IMR-90 (cell line): ENCODE measurements at regions of chrX and their contacts with region 1.

Region 1: DNA sequence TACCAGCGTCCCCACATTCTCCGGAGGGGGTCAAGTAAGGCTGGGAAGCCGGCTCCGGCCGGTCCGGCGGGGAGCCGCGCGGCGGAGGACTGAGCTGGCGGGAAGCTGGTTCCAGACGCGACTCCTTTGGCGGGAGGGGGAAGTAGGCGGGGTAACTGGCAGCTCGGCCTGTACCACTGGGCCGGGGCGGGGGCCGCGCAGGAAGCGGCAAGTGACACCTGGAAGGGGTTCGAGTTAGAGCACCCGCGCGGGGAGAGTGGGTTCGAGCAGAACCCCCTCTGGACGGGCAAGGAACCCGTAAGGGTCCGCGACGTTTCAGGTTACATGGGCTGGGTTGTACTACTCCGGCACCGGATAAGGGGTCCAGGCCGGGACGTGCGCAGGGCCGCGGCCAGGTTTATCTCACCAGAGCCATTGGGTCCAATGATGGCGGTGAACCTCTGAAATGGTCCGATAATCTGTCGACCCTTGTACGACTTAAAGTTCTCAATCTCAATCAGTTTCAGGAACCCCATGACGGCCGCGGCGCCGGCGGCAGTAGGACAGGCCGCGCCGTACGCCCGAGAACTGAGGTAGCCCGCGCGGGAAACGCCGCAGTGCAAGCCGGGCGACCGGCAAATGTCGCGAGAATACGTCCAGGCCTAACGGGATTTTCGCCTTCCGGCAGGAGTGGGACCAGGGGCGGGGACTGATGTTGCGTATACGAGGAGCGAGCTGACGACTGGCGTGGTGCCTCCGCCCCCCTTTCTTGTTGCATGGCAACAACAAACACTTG is at the start of gene SMC1A:
- DNase-seq: peak; percentile 98
- ATAC-seq: peak; percentile 97
- H3K4me3 ChIP-seq: peak within 1 kb of the TSS; percentile 71
- H3K27ac ChIP-seq: peak within 1 kb of the TSS; percentile 67
- H3K4me1 ChIP-seq: peaks cover 5% of the 10 kb centered on the region
- H3K27me3 ChIP-seq: no peaks in the 10 kb centered on the region
- CTCF ChIP-seq: no peak
- POLR2A ChIP-seq: peak; percentile 89
- RAD21 ChIP-seq: no peak
- total RNA-seq, gene SMC1A: 41.0 and 43.0 TPM in 2 replicates

Region 2: DNA sequence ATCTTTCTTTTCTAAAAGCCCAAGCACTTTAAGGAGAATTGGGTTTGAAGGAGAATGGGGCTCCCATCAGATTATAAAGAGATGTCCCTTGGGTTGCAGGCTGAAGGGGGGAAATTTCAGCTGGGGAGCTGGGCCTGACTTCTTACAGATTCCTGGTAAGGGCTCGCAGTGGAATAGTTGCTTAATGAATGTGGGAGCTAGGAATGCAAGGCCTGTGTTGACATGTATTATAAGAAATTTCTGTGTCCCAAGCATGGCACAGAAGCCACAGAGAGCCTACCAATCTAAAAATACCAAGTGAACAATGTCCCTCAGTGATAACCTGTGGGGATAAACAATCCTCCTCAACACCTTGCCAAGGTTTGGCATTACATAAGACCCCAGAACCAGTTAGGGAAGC is 974.8 kb after region 1 on chrX:
- CTCF ChIA-PET with region 1: no interaction called
- POLR2A ChIA-PET with region 1: interaction called, 16 read pairs
- dilution Hi-C with region 1: no loop called
- in situ Hi-C with region 1: no loop called
- intact Hi-C with region 1: no loop called
- DNase-seq: no peak
- ATAC-seq: no peak; the same call in 1 of the 2 replicates
- H3K4me3 ChIP-seq: no peak overlapping the region
- H3K27ac ChIP-seq: no peak overlapping the region
- H3K4me1 ChIP-seq: no peaks in the 10 kb centered on the region
- H3K27me3 ChIP-seq: no peaks in the 10 kb centered on the region
- CTCF ChIP-seq: no peak
- POLR2A ChIP-seq: no peak
- RAD21 ChIP-seq: no peak